HepG2 (cell line): ENCODE measurements at regions of chr10 and their contacts with region 1.

Region 1: DNA sequence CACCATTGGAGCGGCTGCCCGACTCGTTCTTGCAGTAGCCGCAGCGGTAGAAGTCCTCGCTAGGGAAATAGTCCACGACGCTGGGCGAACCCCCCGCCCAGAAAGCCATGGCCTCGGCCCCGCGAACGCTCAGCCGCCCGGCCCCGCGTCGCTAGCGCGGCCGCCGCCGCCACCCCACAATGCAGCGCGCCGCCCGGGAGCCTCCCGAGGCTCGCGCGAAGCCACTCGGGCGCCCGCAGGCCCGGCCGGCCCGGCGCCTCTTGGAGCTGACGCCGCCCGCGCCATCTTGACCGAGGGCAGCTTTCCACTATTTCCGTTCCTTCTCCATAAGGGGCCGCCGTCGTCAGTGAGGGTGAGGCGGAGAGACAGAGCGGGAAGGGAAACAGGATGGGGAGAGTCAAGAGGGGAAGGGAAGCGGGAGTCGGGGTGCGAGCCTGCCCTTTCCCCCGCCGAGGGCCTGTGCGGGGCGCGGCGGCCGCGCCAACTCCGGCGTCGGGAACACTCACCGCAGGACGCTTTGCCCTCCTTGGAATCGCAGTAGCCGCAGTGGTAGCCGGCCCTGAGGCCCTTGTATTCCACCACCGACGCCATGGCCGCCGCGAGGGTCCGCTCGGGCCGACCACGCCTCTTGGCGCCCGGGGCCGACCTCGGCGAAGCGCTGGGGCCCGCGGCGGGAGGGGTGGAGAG is at the start of gene ATE1:
- DNase-seq: peak; percentile 88
- ATAC-seq: peak; percentile 91
- H3K4me3 ChIP-seq: peak within 1 kb of the TSS; percentile 91 to 98 (median 98)
- H3K27ac ChIP-seq: peak within 1 kb of the TSS; percentile 95
- H3K4me1 ChIP-seq: peaks cover 53% of the 10 kb centered on the region
- H3K27me3 ChIP-seq: no peaks in the 10 kb centered on the region; a peak in 1 of 5 replicates
- CTCF ChIP-seq: peak; percentile 51
- EP300 ChIP-seq: peak in 1 of 2 experiments; percentile 37; a peak in 2 of 4 replicates
- POLR2A ChIP-seq: peak; percentile 81 to 91
- RAD21 ChIP-seq: peak; percentile 39; the same call in 1 of the 2 replicates
- total RNA-seq, gene ATE1: 42.2 and 68.9 TPM in 2 replicates

Region 2: DNA sequence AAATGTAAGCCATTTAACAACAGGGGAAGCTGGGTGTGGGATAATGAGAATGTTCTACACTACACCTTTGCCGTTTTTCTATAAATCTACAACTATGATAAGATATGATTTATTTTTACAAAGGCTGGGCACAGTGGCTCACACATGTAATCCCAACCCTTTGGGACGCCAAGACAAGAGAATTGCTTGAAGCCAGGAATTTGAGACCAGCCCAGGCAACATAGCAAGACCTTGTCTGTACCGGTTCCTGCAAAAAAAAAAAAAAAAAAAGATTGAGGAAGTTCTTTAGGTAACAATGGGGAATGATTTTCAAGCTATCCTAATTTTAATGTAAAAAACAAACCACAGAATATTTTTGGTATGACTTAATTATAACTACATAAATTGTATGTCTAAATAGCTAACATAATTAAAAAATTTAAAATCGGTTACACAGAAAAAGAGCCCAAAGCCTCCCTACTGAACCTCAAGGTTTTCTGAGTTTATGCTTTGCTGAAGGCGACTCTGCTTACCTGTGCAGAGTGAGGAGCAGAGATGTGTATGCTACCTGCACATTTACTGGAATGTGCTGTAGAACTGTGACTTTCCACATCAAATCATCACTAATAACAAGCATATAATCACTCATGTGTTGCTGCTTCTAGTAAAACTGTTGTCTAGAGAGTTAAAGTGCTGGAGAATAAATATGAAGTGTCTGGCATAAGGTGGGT is 163.6 kb before region 1 on chr10:
- CTCF ChIA-PET with region 1: no interaction called
- POLR2A ChIA-PET with region 1: no interaction called
- in situ Hi-C with region 1: no loop called
- intact Hi-C with region 1: no loop called
- DNase-seq: no peak
- ATAC-seq: no peak
- H3K4me3 ChIP-seq: no peak overlapping the region
- H3K27ac ChIP-seq: no peak overlapping the region
- H3K4me1 ChIP-seq: peaks cover 10% of the 10 kb centered on the region; the same call in 1 of the 2 replicates
- H3K27me3 ChIP-seq: no peaks in the 10 kb centered on the region
- CTCF ChIP-seq: no peak
- EP300 ChIP-seq: no peak
- POLR2A ChIP-seq: no peak
- RAD21 ChIP-seq: no peak

Region 3: GRCh38 chr10:121854809-121855445 is 73.1 kb before region 1 on chr10:
- CTCF ChIA-PET with region 1: no interaction called
- POLR2A ChIA-PET with region 1: interaction called, 10 read pairs
- in situ Hi-C with region 1: no loop called
- intact Hi-C with region 1: no loop called
- DNase-seq: peak; percentile 93
- ATAC-seq: peak; percentile 98
- H3K4me3 ChIP-seq: peak overlapping the region; percentile 4 to 41 (median 38); a peak in 4 of 6 replicates
- H3K27ac ChIP-seq: peak overlapping the region; percentile 77
- H3K4me1 ChIP-seq: peaks cover 39% of the 10 kb centered on the region
- H3K27me3 ChIP-seq: no peaks in the 10 kb centered on the region
- CTCF ChIP-seq: no peak
- EP300 ChIP-seq: peak; percentile 75 to 86; a peak in 3 of 4 replicates
- POLR2A ChIP-seq: no peak; a peak in 1 of 4 replicates
- RAD21 ChIP-seq: no peak

Region 4: GRCh38 chr10:121974535-121975294 is 46.7 kb after region 1 on chr10 and contains the start of gene NSMCE4A:
- CTCF ChIA-PET with region 1: no interaction called
- POLR2A ChIA-PET with region 1: interaction called, 7 read pairs
- in situ Hi-C with region 1: no loop called
- intact Hi-C with region 1: loop called (anchors 2 kb)
- DNase-seq: peak; percentile 60
- ATAC-seq: peak; percentile 91
- H3K4me3 ChIP-seq: peak within 1 kb of the TSS; percentile 69 to 89 (median 83)
- H3K27ac ChIP-seq: peak within 1 kb of the TSS; percentile 97
- H3K4me1 ChIP-seq: peaks cover 27% of the 10 kb centered on the region
- H3K27me3 ChIP-seq: no peaks in the 10 kb centered on the region
- CTCF ChIP-seq: peak; percentile 78
- EP300 ChIP-seq: no peak; a peak in 1 of 4 replicates
- POLR2A ChIP-seq: peak; percentile 67 to 70; a peak in 3 of 4 replicates
- RAD21 ChIP-seq: peak; percentile 75
- total RNA-seq, gene NSMCE4A: 91.6 and 108 TPM in 2 replicates

Region 5: GRCh38 chr10:122013311-122013780 is 85.4 kb after region 1 on chr10:
- CTCF ChIA-PET with region 1: no interaction called
- POLR2A ChIA-PET with region 1: interaction called, 12 read pairs
- in situ Hi-C with region 1: no loop called
- intact Hi-C with region 1: no loop called
- DNase-seq: peak; percentile 68
- ATAC-seq: peak; percentile 97
- H3K4me3 ChIP-seq: peak overlapping the region in 2 of 3 experiments; percentile 22 to 52; a peak in 3 of 6 replicates
- H3K27ac ChIP-seq: peak overlapping the region; percentile 32
- H3K4me1 ChIP-seq: peaks cover 35% of the 10 kb centered on the region
- H3K27me3 ChIP-seq: 0 out of 5 replicates have a peak, but pooled peaks cover 0 to under 1% of the 10 kb centered on the region in 2 experiments
- CTCF ChIP-seq: peak; percentile 51
- EP300 ChIP-seq: no peak
- POLR2A ChIP-seq: no peak
- RAD21 ChIP-seq: no peak

Region 6: DNA sequence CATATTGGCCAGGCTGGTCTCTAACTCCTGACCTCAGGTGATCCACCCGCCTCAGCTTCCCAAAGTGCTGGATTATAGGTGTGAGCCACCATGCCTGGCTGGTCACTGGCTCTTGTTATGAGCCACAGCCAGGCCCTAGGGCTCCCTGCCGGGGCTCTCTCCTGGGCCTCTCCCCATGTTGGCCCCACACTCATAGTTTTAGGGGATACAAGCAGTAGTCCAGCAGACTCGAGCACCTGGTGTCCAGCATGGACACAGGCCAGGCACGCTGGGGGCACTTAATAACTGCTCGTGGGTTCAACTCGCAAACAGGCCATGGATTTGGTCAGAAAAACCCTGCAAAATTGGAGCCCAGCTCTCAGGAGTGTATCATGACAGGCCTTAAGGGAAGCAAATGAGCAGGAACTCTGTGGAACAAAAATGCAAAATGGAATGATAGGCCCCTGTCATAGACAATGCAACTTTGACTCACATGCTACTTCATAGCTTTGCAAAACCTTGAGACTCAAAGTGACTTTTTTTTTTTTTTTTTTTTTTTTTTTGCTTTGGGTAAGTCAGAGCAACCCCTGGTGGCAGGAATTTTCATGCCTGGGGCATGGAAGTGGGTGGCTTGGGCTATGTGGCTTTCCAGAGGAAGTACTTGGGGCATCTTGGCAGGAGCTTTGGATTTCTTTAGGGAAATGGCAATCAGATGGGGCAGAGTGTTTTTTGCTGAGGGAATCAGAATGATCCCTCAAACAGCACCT is 123.4 kb after region 1 on chr10:
- CTCF ChIA-PET with region 1: no interaction called
- POLR2A ChIA-PET with region 1: interaction called, 6 read pairs
- in situ Hi-C with region 1: no loop called
- intact Hi-C with region 1: loop called (anchors 5 kb)
- DNase-seq: peak; percentile 70
- ATAC-seq: peak; percentile 34
- H3K4me3 ChIP-seq: no peak overlapping the region
- H3K27ac ChIP-seq: no peak overlapping the region
- H3K4me1 ChIP-seq: peaks cover 69% of the 10 kb centered on the region
- H3K27me3 ChIP-seq: no peaks in the 10 kb centered on the region
- CTCF ChIP-seq: peak; percentile 53
- EP300 ChIP-seq: no peak
- POLR2A ChIP-seq: no peak
- RAD21 ChIP-seq: no peak